CD8-positive, alpha-beta T cell (primary cell): ENCODE measurements at regions of chr17 and their contacts with region 1.

Region 1: DNA sequence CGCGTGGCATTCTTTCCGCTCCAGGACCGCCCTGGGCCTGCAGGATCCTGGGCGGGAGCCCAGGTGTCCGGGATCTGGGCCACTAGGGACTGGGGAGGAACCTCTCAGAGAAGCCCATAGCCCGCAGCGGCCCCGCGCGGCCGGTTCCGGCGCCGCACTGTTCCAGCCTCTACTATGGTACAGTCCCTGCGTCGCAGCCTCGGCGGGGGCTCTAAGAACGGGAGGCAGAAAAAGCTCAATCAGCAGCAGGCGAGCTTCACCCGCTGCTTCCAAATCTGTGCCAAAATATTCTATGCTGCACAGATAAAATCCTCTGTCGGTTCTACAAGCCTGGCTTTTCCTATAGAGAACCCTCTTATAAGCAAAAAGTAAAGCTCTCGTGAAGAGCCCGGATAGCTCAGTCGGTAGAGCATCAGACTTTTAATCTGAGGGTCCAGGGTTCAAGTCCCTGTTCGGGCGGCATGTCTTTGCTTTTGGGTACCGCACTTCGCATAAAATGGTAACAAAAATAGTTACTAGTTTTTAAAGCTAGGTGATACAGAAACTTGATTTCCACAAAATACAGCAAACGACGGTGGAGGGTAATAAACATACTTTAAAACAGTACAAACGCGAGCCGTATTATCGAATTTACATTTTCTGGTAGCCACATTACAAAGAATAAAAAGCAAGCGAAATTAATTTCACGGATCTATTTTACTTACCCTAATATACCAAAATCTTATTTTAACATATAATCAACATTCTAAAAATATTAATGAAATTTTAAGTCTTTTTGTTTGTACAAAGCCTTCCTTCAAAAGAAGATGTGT is 661 bp upstream of the ALOXE3 start:
- DNase-seq: peak; percentile 70 to 90 (median 83)
- ATAC-seq: peak; percentile 62
- H3K4me3 ChIP-seq: peak overlapping the region; percentile 69 to 77
- H3K4me3 Mint-ChIP-seq: peak overlapping the region; percentile 93
- H3K27ac ChIP-seq: peak overlapping the region; percentile 32 to 53
- H3K27ac Mint-ChIP-seq: peak overlapping the region; percentile 95
- H3K4me1 ChIP-seq: peaks cover 46% of the 10 kb centered on the region
- H3K4me1 Mint-ChIP-seq: peaks cover 45% of the 10 kb centered on the region
- H3K27me3 ChIP-seq: peaks cover 0 to 57% of the 10 kb centered on the region in 2 experiments
- H3K27me3 Mint-ChIP-seq: peaks cover 33% of the 10 kb centered on the region
- CTCF ChIP-seq: peak; percentile 88

Region 2: DNA sequence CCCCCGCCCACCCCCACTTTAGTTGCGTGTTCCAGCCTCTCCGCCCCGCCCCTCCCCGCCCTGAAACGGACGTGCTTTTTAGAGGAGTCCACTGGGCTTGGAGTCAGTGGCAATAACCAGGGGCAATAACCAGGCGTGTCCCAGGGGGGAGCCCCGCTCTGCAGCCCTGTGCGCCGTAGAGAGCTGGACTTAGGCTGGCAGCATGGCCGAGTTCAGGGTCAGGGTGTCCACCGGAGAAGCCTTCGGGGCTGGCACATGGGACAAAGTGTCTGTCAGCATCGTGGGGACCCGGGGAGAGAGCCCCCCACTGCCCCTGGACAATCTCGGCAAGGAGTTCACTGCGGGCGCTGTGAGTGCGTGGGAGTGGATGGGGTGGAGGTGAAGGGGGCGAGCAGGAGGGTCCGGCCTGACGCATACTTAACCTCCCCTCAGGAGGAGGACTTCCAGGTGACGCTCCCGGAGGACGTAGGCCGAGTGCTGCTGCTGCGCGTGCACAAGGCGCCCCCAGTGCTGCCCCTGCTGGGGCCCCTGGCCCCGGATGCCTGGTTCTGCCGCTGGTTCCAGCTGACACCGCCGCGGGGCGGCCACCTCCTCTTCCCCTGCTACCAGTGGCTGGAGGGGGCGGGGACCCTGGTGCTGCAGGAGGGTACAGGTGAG is 79.9 kb before region 1 on chr17 and contains the start of gene ALOX15B:
- CTCF ChIA-PET with region 1: no interaction called
- POLR2A ChIA-PET with region 1: no interaction called
- intact Hi-C with region 1: no loop called
- DNase-seq: no peak
- ATAC-seq: no peak
- H3K4me3 ChIP-seq: no peak within 1 kb of the TSS
- H3K4me3 Mint-ChIP-seq: peak within 1 kb of the TSS; percentile 26
- H3K27ac ChIP-seq: no peak within 1 kb of the TSS
- H3K27ac Mint-ChIP-seq: no peak within 1 kb of the TSS
- H3K4me1 ChIP-seq: peaks cover 4% of the 10 kb centered on the region
- H3K4me1 Mint-ChIP-seq: peaks cover 2% of the 10 kb centered on the region
- H3K27me3 ChIP-seq: peaks cover 0 to 8% of the 10 kb centered on the region in 2 experiments
- H3K27me3 Mint-ChIP-seq: peaks cover 23% of the 10 kb centered on the region
- CTCF ChIP-seq: no peak
- total RNA-seq, gene ALOX15B: not detected

Region 3: GRCh38 chr17:8091033-8091687 is 27.8 kb before region 1 on chr17:
- CTCF ChIA-PET with region 1: interaction called, 93 read pairs
- POLR2A ChIA-PET with region 1: no interaction called
- intact Hi-C with region 1: loop called (anchors 1 kb)
- DNase-seq: peak in 1 of 9 experiments; percentile 28
- ATAC-seq: no peak
- H3K4me3 ChIP-seq: no peak overlapping the region
- H3K4me3 Mint-ChIP-seq: no peak overlapping the region
- H3K27ac ChIP-seq: no peak overlapping the region
- H3K27ac Mint-ChIP-seq: no peak overlapping the region
- H3K4me1 ChIP-seq: peaks cover 11% of the 10 kb centered on the region
- H3K4me1 Mint-ChIP-seq: peaks cover 8% of the 10 kb centered on the region
- H3K27me3 ChIP-seq: peaks cover 0 to 5% of the 10 kb centered on the region in 2 experiments
- H3K27me3 Mint-ChIP-seq: peaks cover 33% of the 10 kb centered on the region
- CTCF ChIP-seq: no peak

Region 4: GRCh38 chr17:8162233-8162996 is 43.4 kb after region 1 on chr17 and contains the start of gene VAMP2:
- CTCF ChIA-PET with region 1: interaction called, 15 read pairs
- POLR2A ChIA-PET with region 1: interaction called, 3 read pairs
- intact Hi-C with region 1: loop called in 1 of 2 experiments (anchors 2 kb)
- DNase-seq: peak; percentile 72 to 92 (median 83)
- ATAC-seq: peak; percentile 47
- H3K4me3 ChIP-seq: peak within 1 kb of the TSS; percentile 96 to 99
- H3K4me3 Mint-ChIP-seq: peak within 1 kb of the TSS; percentile 92
- H3K27ac ChIP-seq: peak within 1 kb of the TSS; percentile 99 to 100
- H3K27ac Mint-ChIP-seq: peak within 1 kb of the TSS; percentile 98
- H3K4me1 ChIP-seq: peaks cover 62% of the 10 kb centered on the region
- H3K4me1 Mint-ChIP-seq: peaks cover 64% of the 10 kb centered on the region
- H3K27me3 ChIP-seq: no peaks in the 10 kb centered on the region
- H3K27me3 Mint-ChIP-seq: no peaks in the 10 kb centered on the region
- CTCF ChIP-seq: no peak
- total RNA-seq, gene VAMP2: 302 to 303 TPM

Region 5: DNA sequence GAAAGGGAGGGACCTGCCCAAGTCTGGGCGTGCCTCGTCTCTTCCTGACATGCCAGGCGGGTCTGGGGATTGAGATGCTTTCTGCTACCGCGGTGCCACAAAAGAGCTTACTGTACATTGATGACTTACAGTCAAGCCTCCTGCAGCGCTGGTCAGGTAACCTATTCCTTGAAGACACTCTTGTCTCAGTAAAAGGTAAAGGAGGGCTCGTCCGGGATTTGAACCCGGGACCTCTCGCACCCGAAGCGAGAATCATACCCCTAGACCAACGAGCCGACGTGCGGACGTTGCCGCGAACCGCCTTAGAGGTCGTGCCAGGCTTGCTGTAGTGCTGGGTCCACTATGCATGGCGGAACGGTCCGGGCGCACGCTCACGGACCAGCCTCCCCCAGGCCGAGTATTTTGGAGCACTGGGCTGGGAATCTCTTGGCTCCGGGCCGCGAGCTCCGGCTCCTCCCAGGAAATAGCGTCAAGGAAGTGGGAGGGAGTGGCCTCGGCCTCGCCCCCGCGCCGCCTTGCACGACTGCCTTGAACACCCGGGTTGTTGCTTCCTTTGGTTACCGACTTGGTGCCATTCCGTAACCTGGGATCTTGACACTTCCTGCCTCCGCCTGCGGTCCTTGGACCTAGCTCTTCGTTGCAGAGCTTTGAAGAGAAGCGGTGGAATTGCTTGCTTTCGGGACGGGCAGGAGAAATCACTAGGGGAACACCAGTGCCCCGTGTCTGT is 103.8 kb after region 1 on chr17:
- CTCF ChIA-PET with region 1: interaction called, 42 read pairs
- POLR2A ChIA-PET with region 1: interaction called, 64 read pairs
- intact Hi-C with region 1: loop called (anchors 1 kb)
- DNase-seq: peak; percentile 82 to 93 (median 90)
- ATAC-seq: peak; percentile 47
- H3K4me3 ChIP-seq: peak overlapping the region; percentile 80 to 93
- H3K4me3 Mint-ChIP-seq: peak overlapping the region; percentile 92
- H3K27ac ChIP-seq: peak overlapping the region; percentile 90 to 98
- H3K27ac Mint-ChIP-seq: peak overlapping the region; percentile 97
- H3K4me1 ChIP-seq: peaks cover 43% of the 10 kb centered on the region
- H3K4me1 Mint-ChIP-seq: peaks cover 61% of the 10 kb centered on the region
- H3K27me3 ChIP-seq: no peaks in the 10 kb centered on the region
- H3K27me3 Mint-ChIP-seq: no peaks in the 10 kb centered on the region
- CTCF ChIP-seq: no peak

Region 6: DNA sequence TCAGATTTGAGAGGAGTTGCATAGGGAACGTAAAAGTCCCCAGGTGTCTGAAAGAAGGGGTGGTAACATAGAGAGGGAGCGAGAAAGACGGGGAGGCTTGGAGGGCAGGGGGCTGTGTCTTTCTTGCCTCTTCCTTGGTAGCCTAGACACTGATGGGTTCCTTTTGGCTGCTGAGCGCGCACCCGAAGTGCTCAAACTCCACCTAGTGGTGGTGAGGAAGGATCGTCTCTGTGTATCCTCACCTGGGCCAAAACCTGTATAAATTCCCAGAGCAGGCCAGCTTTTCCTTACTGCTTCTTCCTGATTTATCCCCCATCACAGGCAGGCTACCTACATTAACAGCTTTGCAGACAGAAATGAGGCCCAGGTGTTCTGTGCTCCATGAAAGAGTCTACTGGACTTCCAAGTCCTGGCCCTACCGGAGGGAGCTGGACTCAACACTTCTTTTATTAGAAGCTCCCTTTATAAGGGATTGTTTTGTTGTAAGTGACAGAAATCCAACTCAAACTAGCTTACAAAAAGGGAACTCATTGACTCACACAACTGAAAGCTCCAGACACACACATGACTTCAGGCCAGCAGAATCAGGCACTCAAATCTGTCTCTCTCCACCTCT is 181.8 kb after region 1 on chr17:
- CTCF ChIA-PET with region 1: interaction called, 9 read pairs
- POLR2A ChIA-PET with region 1: interaction called, 3 read pairs
- intact Hi-C with region 1: loop called in 1 of 2 experiments (anchors 1 kb)
- DNase-seq: peak; percentile 29 to 86 (median 63)
- ATAC-seq: peak; percentile 93
- H3K4me3 ChIP-seq: no peak overlapping the region
- H3K4me3 Mint-ChIP-seq: no peak overlapping the region
- H3K27ac ChIP-seq: no peak overlapping the region
- H3K27ac Mint-ChIP-seq: peak overlapping the region; percentile 55
- H3K4me1 ChIP-seq: peaks cover 4% of the 10 kb centered on the region
- H3K4me1 Mint-ChIP-seq: peaks cover 9% of the 10 kb centered on the region
- H3K27me3 ChIP-seq: no peaks in the 10 kb centered on the region
- H3K27me3 Mint-ChIP-seq: no peaks in the 10 kb centered on the region
- CTCF ChIP-seq: peak; percentile 76